ENCODE measurements at regions of chr13 and their contacts with region 1.

Region 1: DNA sequence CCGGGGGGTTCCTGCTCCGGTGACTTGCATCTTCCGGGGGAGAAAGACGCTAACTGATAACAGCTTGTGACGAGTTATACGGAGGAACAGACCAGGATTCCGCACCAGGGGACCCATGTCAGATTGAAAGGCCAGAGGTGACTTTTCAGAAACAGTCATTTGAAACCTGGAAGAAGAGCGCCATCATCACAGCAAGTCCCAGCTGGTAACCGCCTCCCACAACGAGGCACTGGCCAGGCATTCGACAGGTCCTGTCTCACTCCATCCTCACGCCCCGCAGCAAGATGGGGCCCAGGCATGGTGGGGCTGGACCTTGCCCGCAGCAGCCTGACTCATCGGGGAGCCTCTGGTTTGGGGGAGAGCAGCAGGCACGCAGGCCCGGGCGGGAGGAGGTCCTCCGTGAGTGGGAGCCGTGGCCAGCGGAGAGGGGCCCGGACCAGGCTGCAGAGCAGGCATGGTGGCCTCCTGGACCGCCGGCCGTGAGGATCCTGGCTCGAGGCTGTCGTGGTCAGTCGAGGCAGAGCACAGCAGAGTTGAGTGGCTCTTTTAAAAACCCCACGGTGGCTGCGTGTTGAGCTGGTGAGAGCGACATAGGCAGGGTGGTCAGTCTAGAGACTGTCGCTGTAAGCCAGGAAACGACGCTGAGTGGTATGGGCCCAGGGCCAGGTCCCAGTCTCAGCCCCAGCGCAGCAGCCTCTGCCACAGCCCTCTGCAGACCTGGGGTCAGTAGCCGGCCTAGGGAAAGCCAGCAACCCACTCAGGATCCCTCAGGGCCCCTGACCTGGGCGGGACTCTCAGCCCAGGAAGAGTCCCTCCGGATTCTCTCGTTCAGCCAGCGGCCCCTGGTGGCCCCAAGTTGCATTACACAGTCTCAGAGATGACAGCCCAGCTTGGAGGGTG is 94.9 kb upstream of the MCF2L start:
- DNase-seq: peak; percentile 87
- ATAC-seq: peak; percentile 81
- H3K4me3 ChIP-seq: peak overlapping the region in 4 of 5 experiments; percentile 46 to 61 (median 54)
- H3K4me3 Mint-ChIP-seq: peak overlapping the region; percentile 91
- H3K27ac ChIP-seq: peak overlapping the region; percentile 65 to 73
- H3K27ac Mint-ChIP-seq: peak overlapping the region; percentile 98
- H3K4me1 ChIP-seq: peaks cover 21 to 34% of the 10 kb centered on the region in 2 donors
- H3K4me1 Mint-ChIP-seq: peaks cover 30% of the 10 kb centered on the region
- H3K27me3 ChIP-seq: no peaks in the 10 kb centered on the region
- H3K27me3 Mint-ChIP-seq: no peaks in the 10 kb centered on the region
- CTCF ChIP-seq: peak; percentile 92

Region 2: GRCh38 chr13:112616586-112617362 is 257.3 kb before region 1 on chr13:
- CTCF ChIA-PET with region 1: interaction called, 5 read pairs
- POLR2A ChIA-PET with region 1: no interaction called
- intact Hi-C with region 1: loop called (anchors 1 kb)
- DNase-seq: peak; percentile 27
- ATAC-seq: no peak
- H3K4me3 ChIP-seq: no peak overlapping the region
- H3K4me3 Mint-ChIP-seq: no peak overlapping the region
- H3K27ac ChIP-seq: no peak overlapping the region
- H3K27ac Mint-ChIP-seq: no peak overlapping the region
- H3K4me1 ChIP-seq: peaks cover 0 to 4% of the 10 kb centered on the region in 2 donors
- H3K4me1 Mint-ChIP-seq: peaks cover 5% of the 10 kb centered on the region
- H3K27me3 ChIP-seq: peaks cover 0 to 13% (median 2%) of the 10 kb centered on the region in 4 experiments
- H3K27me3 Mint-ChIP-seq: peaks cover 29% of the 10 kb centered on the region
- CTCF ChIP-seq: peak; percentile 65

Region 3: DNA sequence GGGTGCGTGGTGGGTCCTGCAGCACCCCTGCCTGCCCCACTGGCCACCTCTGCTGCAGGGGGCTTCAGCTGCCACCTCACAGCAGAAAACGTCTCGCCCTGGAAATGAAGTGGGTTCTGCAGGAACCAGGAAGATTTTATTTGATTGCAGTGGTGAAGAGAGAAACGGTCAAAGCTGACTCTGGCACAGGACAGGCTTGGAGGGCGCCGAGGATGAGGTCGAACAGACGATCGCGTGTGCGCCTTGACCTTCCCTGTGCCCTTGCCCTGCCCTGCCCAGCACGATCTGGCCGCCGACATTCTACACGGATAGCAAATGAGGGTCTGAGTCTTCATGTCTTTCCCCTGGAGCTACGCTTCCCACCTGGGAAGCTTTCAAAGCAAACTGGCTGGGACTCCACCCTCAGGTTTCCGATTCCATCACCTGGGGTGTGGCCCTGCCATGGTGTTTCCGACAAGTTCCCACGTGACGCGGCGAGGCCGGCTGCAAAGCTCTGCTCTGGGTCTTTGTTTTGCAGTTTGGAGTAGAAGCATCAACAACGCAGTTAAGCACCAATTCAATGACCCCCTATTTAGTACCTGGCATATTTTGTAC is 235.8 kb before region 1 on chr13:
- CTCF ChIA-PET with region 1: interaction called, 81 read pairs
- POLR2A ChIA-PET with region 1: no interaction called
- intact Hi-C with region 1: no loop called
- DNase-seq: no peak
- ATAC-seq: no peak
- H3K4me3 ChIP-seq: no peak overlapping the region
- H3K4me3 Mint-ChIP-seq: no peak overlapping the region
- H3K27ac ChIP-seq: no peak overlapping the region
- H3K27ac Mint-ChIP-seq: no peak overlapping the region
- H3K4me1 ChIP-seq: peaks cover 5 to 18% of the 10 kb centered on the region in 2 donors
- H3K4me1 Mint-ChIP-seq: peaks cover 10% of the 10 kb centered on the region
- H3K27me3 ChIP-seq: peaks cover 0 to 26% (median 4%) of the 10 kb centered on the region in 4 experiments
- H3K27me3 Mint-ChIP-seq: peaks cover 24% of the 10 kb centered on the region
- CTCF ChIP-seq: no peak

Region 4: DNA sequence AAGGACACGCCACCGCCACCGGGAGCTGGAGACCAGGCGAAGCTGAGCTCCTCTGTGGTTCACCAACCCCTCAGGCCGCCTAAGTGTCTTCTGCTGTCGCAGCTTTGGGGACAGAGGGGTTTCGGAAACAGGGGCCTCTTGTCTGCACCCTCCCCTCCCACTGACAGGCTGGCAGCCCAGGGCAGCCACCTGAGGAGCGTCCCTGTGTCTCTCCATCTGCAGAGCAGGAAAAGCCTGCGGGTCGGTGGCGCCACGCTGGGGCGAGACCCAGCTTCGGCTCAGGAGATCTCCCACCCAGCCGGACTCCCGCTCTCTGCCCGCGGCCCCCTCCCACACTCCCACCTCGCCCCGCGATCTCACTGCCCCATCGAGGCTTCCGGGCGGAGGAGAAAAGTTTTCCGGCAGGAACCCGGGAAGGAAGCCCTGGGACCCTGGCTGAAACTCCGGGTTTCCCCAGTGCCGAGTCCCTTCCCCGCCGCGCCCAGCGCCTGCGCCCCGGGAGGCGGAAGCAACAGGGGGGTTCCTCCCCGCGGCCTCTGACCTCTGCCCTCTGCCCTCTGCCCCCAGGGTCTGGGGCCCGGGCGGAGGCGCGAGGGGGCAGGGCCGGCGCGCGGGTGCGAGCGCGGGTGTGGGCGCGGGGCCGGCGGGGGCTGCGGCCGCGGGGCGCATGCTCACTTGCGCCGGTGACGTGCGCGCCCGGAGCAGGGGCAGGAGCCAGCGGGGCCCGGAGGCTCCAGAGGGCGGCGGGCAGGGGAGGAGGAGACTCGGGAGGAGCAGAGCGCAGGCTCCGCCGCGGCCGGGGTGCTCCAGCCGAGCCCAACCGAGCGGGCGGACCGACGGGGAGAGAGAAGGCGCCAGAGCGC is 184.6 kb before region 1 on chr13 and contains the start of gene ATP11A:
- CTCF ChIA-PET with region 1: interaction called, 5 read pairs
- POLR2A ChIA-PET with region 1: no interaction called
- intact Hi-C with region 1: loop called (anchors 5 kb)
- DNase-seq: peak; percentile 77
- ATAC-seq: peak; percentile 82
- H3K4me3 ChIP-seq: peak within 1 kb of the TSS; percentile 62 to 85 (median 73)
- H3K4me3 Mint-ChIP-seq: peak within 1 kb of the TSS; percentile 88
- H3K27ac ChIP-seq: peak within 1 kb of the TSS; percentile 36 to 58
- H3K27ac Mint-ChIP-seq: peak within 1 kb of the TSS; percentile 85
- H3K4me1 ChIP-seq: peaks cover 16 to 29% of the 10 kb centered on the region in 2 donors
- H3K4me1 Mint-ChIP-seq: peaks cover 47% of the 10 kb centered on the region
- H3K27me3 ChIP-seq: peaks cover 0 to 7% (median 0%) of the 10 kb centered on the region in 4 experiments
- H3K27me3 Mint-ChIP-seq: peaks cover 6% of the 10 kb centered on the region
- CTCF ChIP-seq: no peak
- total RNA-seq, gene ATP11A: 60.3 and 75.3 TPM in 2 replicates

Region 5: GRCh38 chr13:112885782-112886268 is 11.7 kb after region 1 on chr13:
- CTCF ChIA-PET with region 1: interaction called, 24 read pairs
- POLR2A ChIA-PET with region 1: no interaction called
- intact Hi-C with region 1: no loop called
- DNase-seq: no peak
- ATAC-seq: peak; percentile 21
- H3K4me3 ChIP-seq: no peak overlapping the region
- H3K4me3 Mint-ChIP-seq: no peak overlapping the region
- H3K27ac ChIP-seq: no peak overlapping the region
- H3K27ac Mint-ChIP-seq: no peak overlapping the region
- H3K4me1 ChIP-seq: peaks cover 0 to 8% of the 10 kb centered on the region in 2 donors
- H3K4me1 Mint-ChIP-seq: no peaks in the 10 kb centered on the region
- H3K27me3 ChIP-seq: no peaks in the 10 kb centered on the region
- H3K27me3 Mint-ChIP-seq: no peaks in the 10 kb centered on the region
- CTCF ChIP-seq: no peak

Region 6: GRCh38 chr13:112893570-112894422 is 19.7 kb after region 1 on chr13:
- CTCF ChIA-PET with region 1: interaction called, 24 read pairs
- POLR2A ChIA-PET with region 1: interaction called, 4 read pairs
- intact Hi-C with region 1: loop called (anchors 2 kb)
- DNase-seq: peak; percentile 70
- ATAC-seq: peak; percentile 79
- H3K4me3 ChIP-seq: peak overlapping the region in 4 of 5 experiments; percentile 26 to 63 (median 58)
- H3K4me3 Mint-ChIP-seq: peak overlapping the region; percentile 60
- H3K27ac ChIP-seq: peak overlapping the region; percentile 28 to 59
- H3K27ac Mint-ChIP-seq: peak overlapping the region; percentile 56
- H3K4me1 ChIP-seq: peaks cover 27 to 33% of the 10 kb centered on the region in 2 donors
- H3K4me1 Mint-ChIP-seq: peaks cover 25% of the 10 kb centered on the region
- H3K27me3 ChIP-seq: peaks cover 0 to 7% (median 0%) of the 10 kb centered on the region in 4 experiments
- H3K27me3 Mint-ChIP-seq: no peaks in the 10 kb centered on the region
- CTCF ChIP-seq: no peak

Measured in B cell (primary cell).